Mammary epithelial cell (primary cell): ENCODE measurements at regions of chr1 and their contacts with region 1.

Region 1: DNA sequence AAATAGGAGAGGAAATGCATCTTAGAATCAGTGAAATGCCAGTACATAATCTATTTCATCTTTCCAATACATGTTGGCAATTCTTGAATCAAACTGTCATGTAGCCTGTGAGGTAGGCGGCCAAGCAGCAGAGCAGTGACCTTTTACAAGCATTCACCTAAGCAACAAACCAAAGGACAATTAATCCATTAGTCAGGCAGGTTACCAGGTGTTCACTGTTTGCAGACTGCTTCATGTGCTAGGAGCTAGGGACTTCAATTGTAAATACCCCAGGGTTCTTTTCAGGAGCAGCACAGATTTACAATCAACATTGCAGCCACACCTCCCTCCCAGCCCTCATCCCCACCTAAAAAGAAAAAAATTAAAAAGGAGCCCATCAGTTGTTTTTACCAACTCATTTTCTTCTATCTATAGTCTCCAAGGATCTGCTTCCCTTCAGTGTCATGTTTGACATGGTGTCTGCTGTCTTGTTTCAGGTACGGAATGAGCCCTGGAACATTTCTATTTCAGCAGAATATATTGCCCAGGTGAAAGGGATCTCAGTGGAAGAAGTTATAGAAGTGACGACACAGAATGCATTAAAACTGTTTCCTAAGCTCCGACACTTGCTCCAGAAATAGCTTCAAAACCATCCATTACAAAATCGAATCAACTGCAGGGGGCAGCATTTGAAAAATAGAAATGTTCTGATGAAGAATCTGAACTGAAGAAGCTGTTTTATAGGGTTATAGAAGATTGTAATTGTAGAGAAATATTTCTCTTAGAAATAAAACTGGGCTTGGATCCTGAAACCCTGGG is 23.0 kb downstream of the TATDN3 start:
- DNase-seq: no peak
- H3K4me3 ChIP-seq: no peak overlapping the region
- H3K27ac ChIP-seq: no peak overlapping the region
- H3K4me1 ChIP-seq: no peaks in the 10 kb centered on the region
- H3K27me3 ChIP-seq: no peaks in the 10 kb centered on the region
- CTCF ChIP-seq: peak; percentile 21 to 36

Region 2: GRCh38 chr1:213070406-213070805 is 255.7 kb after region 1 on chr1:
- CTCF ChIA-PET with region 1: no interaction called
- dilution Hi-C with region 1: no loop called
- in situ Hi-C with region 1: no loop called
- intact Hi-C with region 1: loop called (anchors 10 kb)
- DNase-seq: peak; percentile 49
- H3K4me3 ChIP-seq: no peak overlapping the region
- H3K27ac ChIP-seq: no peak overlapping the region
- H3K4me1 ChIP-seq: no peaks in the 10 kb centered on the region
- H3K27me3 ChIP-seq: no peaks in the 10 kb centered on the region
- CTCF ChIP-seq: peak; percentile 12 to 48